Activated CD4-positive, alpha-beta T cell treated with anti-CD3 and anti-CD28 coated beads for 36 hours (primary cell): ENCODE measurements at regions of chr11 and their contacts with region 1.

Region 1: DNA sequence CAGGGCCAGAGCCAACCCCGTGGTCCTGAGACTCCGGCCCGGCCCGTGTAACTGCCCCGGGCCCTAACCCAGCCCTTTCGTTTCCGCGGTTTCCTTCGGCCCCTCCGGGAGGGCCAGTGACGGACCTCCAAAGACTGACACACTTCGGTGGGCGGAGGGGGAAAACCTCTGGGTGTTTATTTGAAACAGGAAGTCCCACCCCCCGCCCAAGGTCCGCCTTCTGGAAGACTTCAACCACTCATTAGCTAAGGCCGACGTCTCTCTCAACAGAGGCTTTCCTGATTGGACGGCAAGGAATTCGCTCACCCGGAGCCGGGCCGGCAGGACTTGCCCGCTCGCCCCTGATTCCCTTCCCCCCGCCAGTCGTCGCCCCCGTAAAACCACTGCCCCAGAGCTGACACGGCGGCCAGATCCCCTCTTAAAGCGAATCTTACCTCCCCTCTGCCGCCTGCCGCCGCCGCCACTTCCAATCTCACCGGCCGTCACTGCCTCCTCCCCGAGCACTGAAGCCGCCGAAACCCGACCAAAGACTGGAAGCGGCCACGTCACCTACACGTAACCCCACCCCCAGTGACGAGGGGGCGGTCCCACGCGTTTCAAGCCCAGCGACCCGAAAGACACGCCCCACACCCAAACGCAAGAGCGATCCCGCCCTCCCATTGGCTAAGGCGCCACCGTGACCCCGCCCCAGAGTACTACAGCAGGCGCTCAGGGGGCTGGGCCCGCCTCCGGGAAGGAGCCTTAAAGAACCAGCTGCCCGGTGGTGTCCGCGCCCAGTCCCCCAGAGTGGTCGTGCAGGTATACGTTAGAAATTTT is at the start of gene STX5:
- DNase-seq: peak; percentile 100
- ATAC-seq: peak; percentile 95
- H3K4me3 Mint-ChIP-seq: peak within 1 kb of the TSS; percentile 84
- H3K27ac Mint-ChIP-seq: peak within 1 kb of the TSS; percentile 99
- H3K4me1 Mint-ChIP-seq: peaks cover 38% of the 10 kb centered on the region
- H3K27me3 Mint-ChIP-seq: no peaks in the 10 kb centered on the region
- total RNA-seq, gene STX5: 19.3 to 21.8 TPM

Region 2: DNA sequence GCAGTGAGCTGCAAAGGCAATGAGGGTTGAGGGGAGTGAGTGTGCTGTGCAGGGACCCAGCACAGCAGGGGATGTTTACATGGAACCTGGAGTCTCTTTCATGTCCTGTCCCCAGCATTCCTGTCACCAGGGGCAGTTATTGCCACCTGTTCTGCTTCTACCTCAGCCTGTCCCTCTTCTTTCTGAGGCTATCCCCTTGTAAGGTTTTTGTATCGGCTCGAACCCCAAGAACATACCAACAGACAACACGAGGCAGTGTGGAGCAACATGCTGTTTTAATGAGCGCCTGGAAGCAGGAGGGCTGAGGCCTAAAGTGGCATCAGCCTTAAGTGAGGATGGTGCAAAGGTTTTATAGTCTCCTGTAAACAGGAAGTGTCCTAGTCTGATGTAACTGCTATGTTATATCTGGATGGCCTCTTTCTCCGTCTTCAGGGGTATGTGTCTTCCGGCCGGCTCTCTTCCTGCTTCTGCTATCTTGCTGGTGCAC is 557.9 kb before region 1 on chr11:
- CTCF ChIA-PET with region 1: no interaction called
- POLR2A ChIA-PET with region 1: no interaction called
- intact Hi-C with region 1: no loop called
- DNase-seq: no peak
- ATAC-seq: no peak
- H3K4me3 Mint-ChIP-seq: no peak overlapping the region
- H3K27ac Mint-ChIP-seq: no peak overlapping the region
- H3K4me1 Mint-ChIP-seq: no peaks in the 10 kb centered on the region
- H3K27me3 Mint-ChIP-seq: peaks cover 13% of the 10 kb centered on the region

Region 3: GRCh38 chr11:62753736-62754603 is 77.8 kb before region 1 on chr11 and contains the start of gene ZBTB3:
- CTCF ChIA-PET with region 1: interaction called, 3 read pairs
- POLR2A ChIA-PET with region 1: interaction called, 18 read pairs
- intact Hi-C with region 1: loop called in 1 of 2 experiments (anchors 1 kb)
- DNase-seq: peak; percentile 98
- ATAC-seq: peak; percentile 98
- H3K4me3 Mint-ChIP-seq: peak within 1 kb of the TSS; percentile 96
- H3K27ac Mint-ChIP-seq: peak within 1 kb of the TSS; percentile 97
- H3K4me1 Mint-ChIP-seq: peaks cover 26% of the 10 kb centered on the region
- H3K27me3 Mint-ChIP-seq: no peaks in the 10 kb centered on the region
- total RNA-seq, gene ZBTB3: 6.0 to 10.2 TPM

Region 4: GRCh38 chr11:62771144-62772021 is 60.3 kb before region 1 on chr11 and contains the start of gene TAF6L:
- CTCF ChIA-PET with region 1: interaction called, 3 read pairs
- POLR2A ChIA-PET with region 1: interaction called, 4 read pairs
- intact Hi-C with region 1: loop called in 1 of 2 experiments (anchors 1 kb)
- DNase-seq: peak; percentile 98
- ATAC-seq: peak; percentile 87
- H3K4me3 Mint-ChIP-seq: peak within 1 kb of the TSS; percentile 85
- H3K27ac Mint-ChIP-seq: peak within 1 kb of the TSS; percentile 89
- H3K4me1 Mint-ChIP-seq: peaks cover 26% of the 10 kb centered on the region
- H3K27me3 Mint-ChIP-seq: no peaks in the 10 kb centered on the region
- total RNA-seq, gene TAF6L: 10.2 to 12.6 TPM

Region 5: GRCh38 chr11:62787005-62787759 is 44.5 kb before region 1 on chr11 and contains the start of gene TMEM179B:
- CTCF ChIA-PET with region 1: interaction called, 6 read pairs
- POLR2A ChIA-PET with region 1: interaction called, 13 read pairs
- intact Hi-C with region 1: loop called in 1 of 2 experiments (anchors 1 kb)
- DNase-seq: peak; percentile 99
- ATAC-seq: peak; percentile 63
- H3K4me3 Mint-ChIP-seq: peak within 1 kb of the TSS; percentile 90
- H3K27ac Mint-ChIP-seq: peak within 1 kb of the TSS; percentile 95
- H3K4me1 Mint-ChIP-seq: peaks cover 42% of the 10 kb centered on the region
- H3K27me3 Mint-ChIP-seq: no peaks in the 10 kb centered on the region
- total RNA-seq, gene TMEM179B: 19.5 to 35.9 TPM

Region 6: GRCh38 chr11:62805076-62805892 is 26.4 kb before region 1 on chr11 and contains the start of gene NXF1:
- CTCF ChIA-PET with region 1: interaction called, 5 read pairs
- POLR2A ChIA-PET with region 1: interaction called, 12 read pairs
- intact Hi-C with region 1: loop called (anchors 1 to 2 kb)
- DNase-seq: peak; percentile 97
- ATAC-seq: peak; percentile 79
- H3K4me3 Mint-ChIP-seq: peak within 1 kb of the TSS; percentile 99
- H3K27ac Mint-ChIP-seq: peak within 1 kb of the TSS; percentile 97
- H3K4me1 Mint-ChIP-seq: peaks cover 29% of the 10 kb centered on the region
- H3K27me3 Mint-ChIP-seq: no peaks in the 10 kb centered on the region
- total RNA-seq, gene NXF1: 89.5 to 97.6 TPM

Region 7: GRCh38 chr11:62811659-62812058 is 20.1 kb before region 1 on chr11:
- CTCF ChIA-PET with region 1: interaction called, 3 read pairs
- POLR2A ChIA-PET with region 1: interaction called, 13 read pairs
- intact Hi-C with region 1: no loop called
- DNase-seq: no peak
- ATAC-seq: no peak
- H3K4me3 Mint-ChIP-seq: no peak overlapping the region
- H3K27ac Mint-ChIP-seq: no peak overlapping the region
- H3K4me1 Mint-ChIP-seq: peaks cover 2% of the 10 kb centered on the region
- H3K27me3 Mint-ChIP-seq: no peaks in the 10 kb centered on the region

Region 8: GRCh38 chr11:62855571-62856332 is 24.0 kb after region 1 on chr11:
- CTCF ChIA-PET with region 1: interaction called, 3 read pairs
- POLR2A ChIA-PET with region 1: interaction called, 22 read pairs
- intact Hi-C with region 1: no loop called
- DNase-seq: peak; percentile 99
- ATAC-seq: peak; percentile 83
- H3K4me3 Mint-ChIP-seq: peak overlapping the region; percentile 99
- H3K27ac Mint-ChIP-seq: peak overlapping the region; percentile 97
- H3K4me1 Mint-ChIP-seq: peaks cover 53% of the 10 kb centered on the region
- H3K27me3 Mint-ChIP-seq: no peaks in the 10 kb centered on the region